ENCODE measurements at regions of chr6 and their contacts with region 1.

Region 1: DNA sequence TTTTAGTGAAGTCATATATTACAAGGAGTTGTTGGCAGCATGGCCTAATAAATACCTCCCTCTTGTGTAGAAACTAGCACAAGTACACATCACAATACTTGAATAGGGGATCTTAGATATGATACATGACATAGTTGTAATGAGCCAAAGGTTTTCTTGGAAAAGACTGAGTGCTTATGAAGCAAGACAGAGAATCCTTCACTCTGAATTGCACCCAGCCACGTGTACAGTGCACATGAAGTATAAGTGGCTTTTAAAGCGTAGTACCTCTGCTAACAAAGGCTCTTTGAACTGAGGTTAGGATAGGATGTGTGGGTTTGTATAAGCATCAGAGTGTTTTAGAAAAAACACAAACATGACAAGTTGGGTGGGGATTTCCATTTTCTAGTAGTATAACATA is 145.5 kb upstream of the STMND1 start:
- DNase-seq: peak in 3 of 9 donors; percentile 8 to 16 (median 12)
- ATAC-seq: peak; percentile 74
- H3K4me3 ChIP-seq: no peak overlapping the region
- H3K4me3 Mint-ChIP-seq: no peak overlapping the region
- H3K27ac ChIP-seq: no peak overlapping the region
- H3K27ac Mint-ChIP-seq: peak overlapping the region in 3 of 9 donors; percentile 27 to 36 (median 29)
- H3K4me1 ChIP-seq: no peaks in the 10 kb centered on the region
- H3K4me1 Mint-ChIP-seq: peaks cover 0 to 12% (median 6%) of the 10 kb centered on the region in 7 donors
- H3K27me3 ChIP-seq: no peaks in the 10 kb centered on the region
- H3K27me3 Mint-ChIP-seq: peaks cover 9 to 22% (median 15%) of the 10 kb centered on the region in 5 donors

Region 2: GRCh38 chr6:16854986-16855385 is 101.4 kb before region 1 on chr6:
- CTCF ChIA-PET with region 1: no interaction called
- POLR2A ChIA-PET with region 1: no interaction called
- intact Hi-C with region 1: loop called in 1 of 2 experiments (anchors 10 kb)
- DNase-seq: no peak
- ATAC-seq: no peak
- H3K4me3 ChIP-seq: no peak overlapping the region
- H3K4me3 Mint-ChIP-seq: no peak overlapping the region
- H3K27ac ChIP-seq: no peak overlapping the region
- H3K27ac Mint-ChIP-seq: no peak overlapping the region
- H3K4me1 ChIP-seq: no peaks in the 10 kb centered on the region
- H3K4me1 Mint-ChIP-seq: peaks cover 0 to 24% (median 6%) of the 10 kb centered on the region in 7 donors
- H3K27me3 ChIP-seq: no peaks in the 10 kb centered on the region
- H3K27me3 Mint-ChIP-seq: peaks cover 6 to 45% (median 36%) of the 10 kb centered on the region in 5 donors